ENCODE measurements at regions of chr17 and their contacts with region 1.

Region 1: GRCh38 chr17:75109407-75110233 is at the start of gene ARMC7:
- DNase-seq: peak; percentile 79 to 96 (median 86)
- ATAC-seq: peak; percentile 90
- H3K4me3 ChIP-seq: peak within 1 kb of the TSS; percentile 81
- H3K4me3 Mint-ChIP-seq: peak within 1 kb of the TSS; percentile 72 to 94 (median 89)
- H3K27ac ChIP-seq: peak within 1 kb of the TSS; percentile 75
- H3K27ac Mint-ChIP-seq: peak within 1 kb of the TSS; percentile 68 to 93 (median 85)
- H3K4me1 ChIP-seq: peaks cover 19 to 20% of the 10 kb centered on the region in 2 donors
- H3K4me1 Mint-ChIP-seq: peaks cover 21 to 41% (median 34%) of the 10 kb centered on the region in 7 donors
- H3K27me3 ChIP-seq: no peaks in the 10 kb centered on the region
- H3K27me3 Mint-ChIP-seq: no peaks in the 10 kb centered on the region
- total RNA-seq, gene ARMC7: 5.8 to 18.9 (median 17.8) TPM

Region 2: GRCh38 chr17:74961657-74962490 is 147.7 kb before region 1 on chr17:
- CTCF ChIA-PET with region 1: interaction called, 22 read pairs
- POLR2A ChIA-PET with region 1: interaction called, 3 read pairs
- intact Hi-C with region 1: loop called (anchors 1 to 5 kb)
- DNase-seq: peak; percentile 69 to 88 (median 78)
- ATAC-seq: peak; percentile 80
- H3K4me3 ChIP-seq: no peak overlapping the region
- H3K4me3 Mint-ChIP-seq: peak overlapping the region in 2 of 10 donors; percentile 14 to 33
- H3K27ac ChIP-seq: no peak overlapping the region
- H3K27ac Mint-ChIP-seq: no peak overlapping the region
- H3K4me1 ChIP-seq: peaks cover 0 to 4% of the 10 kb centered on the region in 2 donors
- H3K4me1 Mint-ChIP-seq: peaks cover 0 to 8% (median 5%) of the 10 kb centered on the region in 7 donors
- H3K27me3 ChIP-seq: no peaks in the 10 kb centered on the region
- H3K27me3 Mint-ChIP-seq: peaks cover 0 to 3% (median 0%) of the 10 kb centered on the region in 5 donors

Region 3: DNA sequence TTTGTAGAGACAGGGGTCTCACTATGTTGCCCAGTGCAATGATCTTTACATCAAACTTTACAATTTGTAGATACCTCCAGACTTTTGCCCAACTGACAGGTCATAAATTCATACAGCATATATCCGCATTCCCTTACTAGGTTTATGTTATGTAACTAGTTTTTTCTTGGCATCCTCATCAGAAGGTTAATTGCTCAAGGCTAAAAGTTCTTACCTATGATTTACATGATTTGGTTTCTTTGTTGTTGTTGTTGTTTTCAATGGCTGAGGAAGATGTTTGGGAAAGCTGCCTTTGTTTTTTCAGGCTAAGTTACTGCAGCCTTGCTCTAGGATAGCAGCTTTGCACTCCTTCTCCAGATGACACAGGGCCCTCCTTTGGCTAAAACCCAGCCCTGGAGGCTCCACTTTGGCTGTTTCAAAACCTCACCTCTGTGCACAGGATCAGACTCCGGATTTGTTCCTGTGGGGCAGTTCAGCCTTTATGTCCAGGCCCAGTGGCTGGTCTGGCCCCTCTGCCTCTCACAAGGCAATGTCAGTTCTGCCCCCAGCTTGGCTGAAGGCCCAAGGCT is 116.1 kb before region 1 on chr17:
- CTCF ChIA-PET with region 1: no interaction called
- POLR2A ChIA-PET with region 1: no interaction called
- intact Hi-C with region 1: no loop called
- DNase-seq: no peak
- ATAC-seq: no peak
- H3K4me3 ChIP-seq: no peak overlapping the region
- H3K4me3 Mint-ChIP-seq: no peak overlapping the region
- H3K27ac ChIP-seq: no peak overlapping the region
- H3K27ac Mint-ChIP-seq: no peak overlapping the region
- H3K4me1 ChIP-seq: peaks cover 0 to under 1% of the 10 kb centered on the region in 2 donors
- H3K4me1 Mint-ChIP-seq: peaks cover 0 to 5% (median 4%) of the 10 kb centered on the region in 7 donors
- H3K27me3 ChIP-seq: no peaks in the 10 kb centered on the region
- H3K27me3 Mint-ChIP-seq: peaks cover 0 to 22% (median 0%) of the 10 kb centered on the region in 5 donors

Region 4: DNA sequence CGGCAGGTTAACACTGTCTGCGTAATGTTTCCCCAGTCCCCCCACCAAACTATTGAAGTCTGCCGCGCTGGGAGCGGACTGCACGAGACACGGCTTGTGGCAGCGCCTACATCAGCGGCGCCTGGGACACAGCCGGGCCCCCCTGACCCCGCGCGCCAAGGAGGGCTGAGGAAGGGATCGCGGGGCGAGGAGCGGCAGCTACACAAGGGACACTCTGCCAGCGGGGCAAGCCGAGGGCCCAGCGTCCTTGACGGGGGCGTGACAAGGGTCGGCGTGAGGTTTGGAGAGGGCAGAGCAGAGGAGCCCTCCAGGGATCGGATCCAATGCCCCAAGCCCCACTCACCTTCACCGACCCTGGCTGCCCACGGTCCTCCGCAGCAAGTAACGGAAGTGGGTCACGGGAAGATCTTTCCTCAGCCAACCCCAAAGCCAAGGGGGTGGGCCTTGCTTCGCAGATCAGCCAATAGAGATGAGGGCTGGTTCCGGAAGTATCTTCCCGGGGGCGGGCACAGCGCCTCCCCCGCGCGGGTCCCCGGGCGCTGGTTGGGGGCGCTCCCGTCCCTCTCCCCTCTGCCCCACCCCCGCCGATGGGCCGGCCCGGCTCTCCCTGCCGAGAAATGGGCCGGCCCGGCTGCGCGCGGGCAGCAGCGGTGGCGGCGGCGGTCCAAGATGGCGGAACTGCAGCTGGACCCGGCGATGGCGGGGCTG is 62.9 kb before region 1 on chr17 and contains the starts of genes ATP5PD and KCTD2:
- CTCF ChIA-PET with region 1: no interaction called
- POLR2A ChIA-PET with region 1: interaction called, 4 read pairs
- intact Hi-C with region 1: loop called in 1 of 2 experiments (anchors 5 kb)
- DNase-seq: peak; percentile 82 to 93 (median 91)
- ATAC-seq: peak; percentile 98
- H3K4me3 ChIP-seq: peak within 1 kb of the TSS; percentile 77
- H3K4me3 Mint-ChIP-seq: peak within 1 kb of the TSS; percentile 95 to 99 (median 98)
- H3K27ac ChIP-seq: peak within 1 kb of the TSS; percentile 93
- H3K27ac Mint-ChIP-seq: peak within 1 kb of the TSS; percentile 92 to 99 (median 96)
- H3K4me1 ChIP-seq: peaks cover 13 to 16% of the 10 kb centered on the region in 2 donors
- H3K4me1 Mint-ChIP-seq: peaks cover 30 to 62% (median 49%) of the 10 kb centered on the region in 7 donors
- H3K27me3 ChIP-seq: no peaks in the 10 kb centered on the region
- H3K27me3 Mint-ChIP-seq: no peaks in the 10 kb centered on the region
- total RNA-seq, gene ATP5PD: 113 to 195 (median 161) TPM
- total RNA-seq, gene KCTD2: 19.5 to 35.7 (median 23.0) TPM

Region 5: DNA sequence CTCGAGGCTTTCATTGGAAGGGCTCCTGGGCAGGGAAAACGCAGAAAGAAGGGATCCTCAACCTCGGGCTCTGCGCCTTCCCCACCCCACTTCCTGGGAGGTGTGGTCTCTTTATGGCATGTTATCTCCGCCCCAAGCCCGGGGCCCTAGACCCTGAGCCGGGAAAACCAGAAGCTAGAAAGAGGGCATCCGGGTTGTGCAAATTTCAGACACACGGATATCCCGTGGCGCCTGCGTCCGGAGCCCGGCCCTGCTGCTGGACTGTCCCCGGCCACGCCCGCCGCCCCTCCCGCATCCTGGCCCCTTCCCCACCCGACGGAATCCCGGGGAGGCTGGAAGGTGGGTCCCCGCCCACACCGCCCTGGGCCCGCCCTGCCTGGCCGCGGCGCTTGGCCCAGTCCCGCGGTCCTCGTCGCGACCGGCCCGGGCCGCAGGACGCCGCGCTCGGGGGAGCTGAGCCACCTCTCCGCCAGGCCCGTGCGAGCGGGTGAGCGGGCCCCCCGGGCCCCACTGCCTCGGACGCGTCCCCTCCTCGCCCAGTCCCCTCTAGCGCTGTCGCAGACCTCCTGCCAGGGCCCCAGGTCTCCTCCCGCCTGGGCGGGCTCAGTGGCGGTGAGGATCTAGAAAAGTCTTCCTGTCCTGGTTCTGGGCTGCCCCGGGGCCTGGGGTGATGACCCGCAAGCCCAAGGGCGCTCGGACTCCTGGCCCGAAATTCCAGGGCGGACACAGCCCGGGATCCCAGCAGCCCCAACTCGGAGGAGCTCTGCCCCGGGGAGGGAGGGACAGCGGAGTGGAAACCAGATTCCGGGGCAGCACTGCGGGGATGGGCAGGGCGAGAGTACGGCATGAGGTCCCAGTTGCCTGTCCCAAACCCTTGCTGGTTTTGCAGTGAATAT is 21.8 kb before region 1 on chr17 and contains the start of gene SLC16A5:
- CTCF ChIA-PET with region 1: interaction called, 11 read pairs
- POLR2A ChIA-PET with region 1: interaction called, 19 read pairs
- intact Hi-C with region 1: loop called in 1 of 2 experiments (anchors 2 kb)
- DNase-seq: peak; percentile 29 to 73 (median 51)
- ATAC-seq: peak; percentile 73
- H3K4me3 ChIP-seq: peak within 1 kb of the TSS; percentile 60
- H3K4me3 Mint-ChIP-seq: peak within 1 kb of the TSS; percentile 58 to 90 (median 84)
- H3K27ac ChIP-seq: peak within 1 kb of the TSS; percentile 79
- H3K27ac Mint-ChIP-seq: peak within 1 kb of the TSS; percentile 77 to 94 (median 91)
- H3K4me1 ChIP-seq: peaks cover 6 to 29% of the 10 kb centered on the region in 2 donors
- H3K4me1 Mint-ChIP-seq: peaks cover 51 to 74% (median 58%) of the 10 kb centered on the region in 7 donors
- H3K27me3 ChIP-seq: no peaks in the 10 kb centered on the region
- H3K27me3 Mint-ChIP-seq: no peaks in the 10 kb centered on the region
- total RNA-seq, gene SLC16A5: 9.2 to 26.3 (median 24.5) TPM

Region 6: GRCh38 chr17:75147878-75148546 is 38.4 kb after region 1 on chr17:
- CTCF ChIA-PET with region 1: interaction called, 12 read pairs
- POLR2A ChIA-PET with region 1: interaction called, 3 read pairs
- intact Hi-C with region 1: no loop called
- DNase-seq: no peak
- ATAC-seq: peak; percentile 51
- H3K4me3 ChIP-seq: no peak overlapping the region
- H3K4me3 Mint-ChIP-seq: no peak overlapping the region
- H3K27ac ChIP-seq: no peak overlapping the region
- H3K27ac Mint-ChIP-seq: peak overlapping the region in 3 of 9 donors; percentile 32 to 51 (median 46)
- H3K4me1 ChIP-seq: peaks cover 0 to 6% of the 10 kb centered on the region in 2 donors
- H3K4me1 Mint-ChIP-seq: peaks cover 17 to 36% (median 20%) of the 10 kb centered on the region in 7 donors
- H3K27me3 ChIP-seq: no peaks in the 10 kb centered on the region
- H3K27me3 Mint-ChIP-seq: no peaks in the 10 kb centered on the region

Region 7: GRCh38 chr17:75182569-75183450 is 73.2 kb after region 1 on chr17 and contains the start of gene SUMO2:
- CTCF ChIA-PET with region 1: interaction called, 4 read pairs
- POLR2A ChIA-PET with region 1: interaction called, 6 read pairs
- intact Hi-C with region 1: loop called in 1 of 2 experiments (anchors 1 kb)
- DNase-seq: peak; percentile 90 to 97 (median 94)
- ATAC-seq: peak; percentile 92
- H3K4me3 ChIP-seq: peak within 1 kb of the TSS; percentile 56
- H3K4me3 Mint-ChIP-seq: peak within 1 kb of the TSS; percentile 87 to 100 (median 92)
- H3K27ac ChIP-seq: peak within 1 kb of the TSS; percentile 94
- H3K27ac Mint-ChIP-seq: peak within 1 kb of the TSS; percentile 92 to 99 (median 97)
- H3K4me1 ChIP-seq: peaks cover 22 to 26% of the 10 kb centered on the region in 2 donors
- H3K4me1 Mint-ChIP-seq: peaks cover 20 to 55% (median 38%) of the 10 kb centered on the region in 7 donors
- H3K27me3 ChIP-seq: no peaks in the 10 kb centered on the region
- H3K27me3 Mint-ChIP-seq: no peaks in the 10 kb centered on the region
- total RNA-seq, gene SUMO2: 201 to 494 (median 247) TPM

Region 8: GRCh38 chr17:75271233-75271954 is 161.8 kb after region 1 on chr17:
- CTCF ChIA-PET with region 1: interaction called, 5 read pairs
- POLR2A ChIA-PET with region 1: interaction called, 3 read pairs
- intact Hi-C with region 1: loop called in 1 of 2 experiments (anchors 1 kb)
- DNase-seq: peak; percentile 80 to 96 (median 90)
- ATAC-seq: peak; percentile 96
- H3K4me3 ChIP-seq: peak overlapping the region; percentile 75
- H3K4me3 Mint-ChIP-seq: peak overlapping the region; percentile 67 to 87 (median 84)
- H3K27ac ChIP-seq: peak overlapping the region; percentile 84
- H3K27ac Mint-ChIP-seq: peak overlapping the region; percentile 57 to 90 (median 85)
- H3K4me1 ChIP-seq: peaks cover 15 to 24% of the 10 kb centered on the region in 2 donors
- H3K4me1 Mint-ChIP-seq: peaks cover 5 to 41% (median 34%) of the 10 kb centered on the region in 7 donors
- H3K27me3 ChIP-seq: no peaks in the 10 kb centered on the region
- H3K27me3 Mint-ChIP-seq: no peaks in the 10 kb centered on the region